ENCODE measurements at regions of chr13 and their contacts with region 1.

Region 1: DNA sequence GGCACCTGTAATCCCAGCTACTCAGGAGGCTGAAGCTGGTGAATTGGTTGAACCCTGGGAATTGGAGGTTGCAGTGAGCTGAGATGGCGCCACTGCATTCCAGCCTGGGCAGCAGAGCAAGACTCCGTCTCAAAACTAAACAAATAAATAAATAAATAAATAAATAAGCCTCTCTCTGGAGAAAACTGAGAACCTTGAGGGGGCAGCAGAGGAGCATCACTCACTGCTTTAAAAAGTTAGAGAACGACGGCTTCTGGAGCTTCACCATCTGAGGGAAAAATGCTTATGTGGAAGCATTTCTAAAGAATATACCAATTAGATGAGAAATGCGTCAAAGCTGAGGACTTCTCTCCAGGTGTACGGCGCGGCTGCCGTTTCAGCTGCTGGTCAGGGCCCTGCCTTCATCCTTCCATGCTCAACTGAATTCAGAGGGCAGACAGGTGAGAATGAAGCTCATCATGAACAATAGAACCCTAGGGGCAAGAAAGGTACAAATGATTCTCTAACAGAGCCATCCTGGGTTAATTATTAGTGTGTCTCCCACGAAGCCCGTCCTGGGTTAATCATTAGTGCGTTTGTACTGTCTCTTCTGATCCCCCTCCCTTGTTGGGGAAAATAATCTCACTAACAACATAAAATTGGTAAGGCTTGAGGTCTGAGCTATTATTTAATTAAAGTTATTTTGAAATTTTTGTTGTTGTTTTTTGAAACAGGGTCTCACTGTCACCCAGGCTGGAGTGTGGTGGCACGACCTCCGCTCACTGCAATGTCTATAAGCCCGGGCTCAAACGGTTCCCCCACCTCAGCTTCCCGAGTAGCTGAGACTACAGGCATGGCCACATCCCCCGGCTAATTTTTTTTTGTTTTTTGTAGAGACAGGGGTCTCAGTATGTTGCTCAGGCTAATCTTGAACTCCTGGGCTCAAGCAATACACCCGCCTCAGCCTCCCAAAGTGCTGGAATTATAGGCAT is 80.1 kb downstream of the IPO5 start:
- DNase-seq: peak; percentile 33
- H3K4me3 ChIP-seq: no peak overlapping the region
- H3K27ac ChIP-seq: no peak overlapping the region
- H3K4me1 ChIP-seq: no peaks in the 10 kb centered on the region
- H3K27me3 ChIP-seq: no peaks in the 10 kb centered on the region
- CTCF ChIP-seq: peak; percentile 9 to 42

Region 2: DNA sequence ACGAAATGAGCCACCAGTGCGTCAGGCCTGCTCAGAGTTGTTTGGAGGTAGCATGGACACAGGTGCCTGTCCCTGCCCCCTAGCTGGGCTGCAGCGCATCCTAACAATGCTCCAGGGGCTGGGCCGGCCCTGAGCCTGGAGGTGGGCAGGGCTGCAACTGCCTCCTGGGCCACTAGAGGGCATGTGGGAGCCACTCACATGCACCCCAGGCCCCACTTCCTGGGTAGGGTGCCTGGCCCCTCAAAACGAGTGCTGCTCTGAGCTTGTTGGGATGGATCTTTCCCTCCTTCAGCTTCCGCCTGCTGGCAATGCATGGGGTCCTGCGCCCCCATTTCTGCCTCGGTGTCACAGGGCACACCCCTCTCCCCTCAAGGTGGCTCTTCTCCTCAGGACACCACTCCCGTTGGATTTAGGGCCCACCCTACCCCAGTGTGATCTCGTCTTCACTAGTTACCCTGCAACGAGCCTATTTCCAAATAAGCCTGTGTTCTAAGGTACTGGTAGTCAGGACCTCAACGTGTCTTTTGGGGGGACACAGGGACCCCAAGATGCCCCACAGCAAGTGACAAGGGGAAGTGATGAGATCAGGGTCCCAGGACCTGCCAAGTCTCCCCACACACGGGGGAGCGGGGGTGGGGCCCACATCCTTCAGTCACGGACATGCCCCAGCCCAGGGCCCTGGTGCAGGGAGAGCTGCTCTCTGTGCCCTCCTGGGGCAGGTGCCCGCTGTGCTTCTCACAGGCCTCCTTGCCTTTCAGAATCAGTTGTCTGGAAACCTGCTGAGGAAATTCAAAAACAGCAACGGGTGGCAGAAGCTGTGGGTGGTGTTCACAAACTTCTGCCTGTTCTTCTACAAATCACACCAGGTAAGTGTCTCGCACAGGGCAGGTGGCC is 412.0 kb after region 1 on chr13:
- CTCF ChIA-PET with region 1: no interaction called
- dilution Hi-C with region 1: no loop called
- in situ Hi-C with region 1: no loop called
- intact Hi-C with region 1: loop called (anchors 10 kb)
- DNase-seq: peak; percentile 50
- H3K4me3 ChIP-seq: no peak overlapping the region
- H3K27ac ChIP-seq: no peak overlapping the region
- H3K4me1 ChIP-seq: peaks cover 24% of the 10 kb centered on the region
- H3K27me3 ChIP-seq: no peaks in the 10 kb centered on the region
- CTCF ChIP-seq: peak; percentile 86 to 97

Measured in mammary epithelial cell (primary cell).